CD14-positive monocyte (primary cell): ENCODE measurements at regions of chr13 and their contacts with region 1.

Region 1: GRCh38 chr13:45718063-45718462 is 15.9 kb downstream of the CBY2 start:
- DNase-seq: peak in 2 of 3 donors; percentile 8 to 20
- H3K4me3 ChIP-seq: no peak overlapping the region
- H3K4me3 Mint-ChIP-seq: no peak overlapping the region
- H3K27ac ChIP-seq: no peak overlapping the region
- H3K27ac Mint-ChIP-seq: no peak overlapping the region
- H3K4me1 ChIP-seq: no peaks in the 10 kb centered on the region
- H3K4me1 Mint-ChIP-seq: no peaks in the 10 kb centered on the region
- H3K27me3 ChIP-seq: no peaks in the 10 kb centered on the region
- H3K27me3 Mint-ChIP-seq: peaks cover 0 to 3% (median 0%) of the 10 kb centered on the region in 3 donors
- CTCF ChIP-seq: peak; percentile 54

Region 2: DNA sequence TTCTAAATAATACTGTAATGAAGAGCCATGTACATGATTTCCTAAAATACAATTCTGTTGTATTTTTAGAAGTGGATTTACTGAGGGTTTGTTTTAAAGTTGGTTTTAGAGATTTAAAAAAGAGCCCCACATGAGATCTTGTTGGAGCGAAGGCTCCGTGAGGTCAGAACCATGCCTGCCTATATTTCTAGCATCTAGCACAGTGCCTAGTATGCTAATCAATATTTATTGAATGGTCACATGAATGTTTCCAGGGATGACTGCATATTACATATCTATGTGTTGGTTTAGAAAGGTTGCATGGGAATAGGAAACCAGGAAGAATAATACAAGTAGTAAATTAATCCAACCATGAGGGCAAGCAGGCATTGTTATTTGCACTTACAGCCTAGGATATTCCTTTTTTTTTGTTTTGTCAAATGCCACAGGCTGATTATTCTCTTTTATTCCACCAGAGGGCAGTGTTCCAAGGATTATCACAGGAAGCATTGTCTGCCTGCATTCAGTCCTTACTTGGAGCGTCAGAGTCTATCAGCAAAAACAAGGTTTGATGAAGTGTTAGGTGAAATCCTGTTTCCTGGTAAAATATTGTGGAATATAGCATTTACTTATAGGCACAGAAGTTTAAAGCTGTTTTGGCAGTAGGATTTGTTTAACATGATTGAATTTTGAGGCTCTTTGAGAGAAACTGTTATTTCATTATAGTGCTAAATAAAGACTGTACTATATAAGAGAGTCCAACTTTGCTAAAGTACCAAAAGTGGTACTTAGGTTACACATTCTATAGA is 206.6 kb before region 1 on chr13:
- intact Hi-C with region 1: loop called in 1 of 2 experiments (anchors 10 kb)
- DNase-seq: peak; percentile 41 to 61 (median 55)
- H3K4me3 ChIP-seq: no peak overlapping the region
- H3K4me3 Mint-ChIP-seq: no peak overlapping the region
- H3K27ac ChIP-seq: peak overlapping the region in 1 of 2 donors; percentile 40
- H3K27ac Mint-ChIP-seq: peak overlapping the region in 1 of 7 donors; percentile 39
- H3K4me1 ChIP-seq: no peaks in the 10 kb centered on the region
- H3K4me1 Mint-ChIP-seq: peaks cover 4% of the 10 kb centered on the region
- H3K27me3 ChIP-seq: no peaks in the 10 kb centered on the region
- H3K27me3 Mint-ChIP-seq: no peaks in the 10 kb centered on the region
- CTCF ChIP-seq: peak; percentile 94

Region 3: DNA sequence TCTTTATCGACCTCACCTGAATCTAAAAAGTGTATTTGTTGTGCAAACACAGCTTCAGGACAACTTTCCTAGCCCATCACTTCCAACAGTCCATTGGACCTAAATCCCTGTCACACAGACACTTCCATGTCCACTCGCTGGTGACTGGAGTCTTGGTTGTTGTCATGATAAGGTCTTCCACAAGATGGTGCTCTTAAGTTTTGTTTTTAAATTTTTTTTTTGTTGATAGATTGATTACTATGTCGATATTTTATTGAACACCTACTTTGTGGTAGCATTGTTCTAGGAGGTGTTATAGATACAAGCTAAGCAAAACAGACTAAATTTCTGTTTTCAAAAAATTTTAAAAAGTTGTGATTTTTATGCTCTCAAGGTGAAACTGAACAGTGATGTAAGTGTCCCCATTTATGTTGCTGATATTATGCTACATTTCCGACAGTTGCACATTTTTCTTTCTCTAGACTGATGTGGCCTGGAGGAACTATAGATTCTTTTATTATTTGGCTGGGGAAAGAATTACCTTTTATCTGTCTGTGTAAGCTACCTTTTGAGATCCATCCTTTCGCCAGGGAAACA is 94.5 kb before region 1 on chr13:
- intact Hi-C with region 1: loop called in 1 of 2 experiments (anchors 10 kb)
- DNase-seq: peak in 2 of 3 donors; percentile 6 to 12
- H3K4me3 ChIP-seq: no peak overlapping the region
- H3K4me3 Mint-ChIP-seq: no peak overlapping the region
- H3K27ac ChIP-seq: no peak overlapping the region
- H3K27ac Mint-ChIP-seq: no peak overlapping the region
- H3K4me1 ChIP-seq: no peaks in the 10 kb centered on the region
- H3K4me1 Mint-ChIP-seq: peaks cover 2% of the 10 kb centered on the region
- H3K27me3 ChIP-seq: peaks cover 0 to 5% of the 10 kb centered on the region in 2 donors
- H3K27me3 Mint-ChIP-seq: peaks cover 3 to 21% (median 4%) of the 10 kb centered on the region in 3 donors
- CTCF ChIP-seq: peak; percentile 72